Mammary epithelial cell (primary cell): ENCODE measurements at regions of chr6 and their contacts with region 1.

Region 1: DNA sequence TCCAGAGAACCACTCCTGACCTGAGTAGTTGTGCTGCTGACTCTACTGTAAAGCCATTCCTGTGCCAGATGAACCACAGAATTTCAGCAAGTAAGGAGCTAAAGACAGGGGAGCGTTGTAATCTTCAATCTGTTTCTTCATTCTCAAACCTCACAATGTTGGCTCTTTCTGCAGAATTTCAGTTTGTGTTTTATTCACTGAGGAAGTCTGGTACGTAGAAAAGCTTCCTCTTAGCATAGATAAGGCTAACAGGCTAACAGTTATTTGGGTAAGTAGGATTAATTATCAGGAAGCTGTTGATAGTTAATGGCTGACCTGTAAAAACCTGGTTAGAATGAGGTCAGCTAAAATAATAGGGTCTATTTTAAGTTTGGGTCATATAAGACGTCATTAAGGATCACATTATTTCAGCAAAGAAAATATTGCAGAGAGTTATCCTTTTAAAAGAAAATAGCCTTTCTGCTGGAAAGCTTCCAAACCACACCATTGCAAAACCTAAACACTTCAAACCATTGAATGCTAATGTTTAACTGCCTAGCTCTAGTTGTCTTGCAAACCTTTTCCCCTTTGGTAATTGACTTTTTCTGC is 14.1 kb upstream of the TENT5A start:
- DNase-seq: peak; percentile 76
- H3K4me3 ChIP-seq: no peak overlapping the region
- H3K27ac ChIP-seq: no peak overlapping the region
- H3K4me1 ChIP-seq: peaks cover 39% of the 10 kb centered on the region
- H3K27me3 ChIP-seq: no peaks in the 10 kb centered on the region
- CTCF ChIP-seq: no peak

Region 2: DNA sequence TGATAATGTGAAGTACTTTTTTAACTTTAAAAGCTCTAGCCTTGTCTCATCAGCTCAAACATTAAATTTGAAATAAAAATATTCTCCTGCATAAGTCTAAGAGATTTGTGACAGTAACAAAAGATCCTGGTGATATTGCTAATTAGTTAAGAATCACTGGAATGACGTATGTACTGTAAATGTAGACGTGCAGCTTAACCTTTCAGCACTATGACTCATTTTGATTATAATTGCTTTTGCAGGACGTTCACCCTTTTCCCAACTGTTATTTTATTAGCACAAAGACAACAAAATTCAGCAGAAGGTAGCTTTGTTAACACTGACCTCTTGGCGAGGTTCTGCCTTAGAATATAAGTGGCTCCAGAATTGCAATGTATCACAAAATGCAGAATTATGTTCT is 82.6 kb before region 1 on chr6:
- CTCF ChIA-PET with region 1: no interaction called
- dilution Hi-C with region 1: no loop called
- in situ Hi-C with region 1: no loop called
- intact Hi-C with region 1: no loop called
- DNase-seq: no peak
- H3K4me3 ChIP-seq: no peak overlapping the region
- H3K27ac ChIP-seq: no peak overlapping the region
- H3K4me1 ChIP-seq: no peaks in the 10 kb centered on the region
- H3K27me3 ChIP-seq: no peaks in the 10 kb centered on the region
- CTCF ChIP-seq: no peak

Region 3: GRCh38 chr6:81734085-81734484 is 32.5 kb before region 1 on chr6:
- CTCF ChIA-PET with region 1: no interaction called
- dilution Hi-C with region 1: no loop called
- in situ Hi-C with region 1: no loop called
- intact Hi-C with region 1: no loop called
- DNase-seq: no peak
- H3K4me3 ChIP-seq: no peak overlapping the region
- H3K27ac ChIP-seq: no peak overlapping the region
- H3K4me1 ChIP-seq: peaks cover 10% of the 10 kb centered on the region
- H3K27me3 ChIP-seq: no peaks in the 10 kb centered on the region
- CTCF ChIP-seq: peak in 1 of 2 donors; percentile 34

Region 4: DNA sequence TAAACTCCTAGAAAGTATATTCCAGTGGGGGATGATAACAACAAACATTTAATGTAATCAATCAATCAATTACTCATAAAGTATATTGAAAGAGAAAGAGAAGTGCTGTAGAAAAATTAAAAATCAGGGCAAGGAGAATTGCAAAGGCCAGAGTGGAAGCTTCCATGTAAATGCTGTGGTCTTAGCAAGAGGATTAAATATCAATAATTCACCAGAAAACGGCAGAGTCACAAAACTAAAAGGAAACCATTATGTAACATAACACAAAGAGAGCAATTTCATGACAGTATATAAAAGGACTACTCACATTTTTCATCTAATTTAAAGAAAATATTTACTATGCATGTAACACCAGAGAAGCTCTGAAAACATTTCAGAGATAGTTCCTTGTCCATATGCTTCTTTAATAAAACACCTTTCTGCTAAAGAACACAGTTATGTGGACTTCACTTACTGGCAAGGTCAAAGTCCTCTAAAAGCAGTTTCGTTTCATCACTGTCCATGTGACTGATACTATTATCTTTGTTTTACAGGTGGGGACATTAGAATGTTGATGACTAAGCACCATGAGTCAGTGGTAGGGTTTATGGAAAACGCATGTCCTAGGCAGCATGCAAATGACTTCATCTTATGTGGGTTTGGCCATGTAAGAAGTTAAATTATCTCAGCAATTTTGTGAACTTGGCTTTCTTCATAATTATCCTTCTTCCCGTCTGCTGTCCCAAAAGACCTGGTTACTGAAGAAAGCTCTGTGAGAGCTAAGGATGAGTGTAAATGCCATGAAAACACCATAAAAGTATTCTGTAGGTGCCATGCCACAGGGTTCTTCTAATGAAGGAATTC is 171.7 kb after region 1 on chr6:
- CTCF ChIA-PET with region 1: no interaction called
- dilution Hi-C with region 1: no loop called
- in situ Hi-C with region 1: no loop called
- intact Hi-C with region 1: loop called (anchors 2 kb)
- DNase-seq: peak; percentile 97
- H3K4me3 ChIP-seq: no peak overlapping the region
- H3K27ac ChIP-seq: peak overlapping the region; percentile 98
- H3K4me1 ChIP-seq: peaks cover 29% of the 10 kb centered on the region
- H3K27me3 ChIP-seq: no peaks in the 10 kb centered on the region
- CTCF ChIP-seq: no peak